ENCODE measurements at regions of chr7 and their contacts with region 1.

Region 1: GRCh38 chr7:125670926-125671572 is 741.4 kb upstream of the POT1 start:
- DNase-seq: peak in 2 of 4 donors; percentile 9 to 19
- ATAC-seq: no peak
- H3K4me3 ChIP-seq: no peak overlapping the region
- H3K27ac ChIP-seq: no peak overlapping the region
- H3K4me1 ChIP-seq: no peaks in the 10 kb centered on the region
- H3K27me3 ChIP-seq: no peaks in the 10 kb centered on the region
- CTCF ChIP-seq: peak in 1 of 2 donors; percentile 52

Region 2: DNA sequence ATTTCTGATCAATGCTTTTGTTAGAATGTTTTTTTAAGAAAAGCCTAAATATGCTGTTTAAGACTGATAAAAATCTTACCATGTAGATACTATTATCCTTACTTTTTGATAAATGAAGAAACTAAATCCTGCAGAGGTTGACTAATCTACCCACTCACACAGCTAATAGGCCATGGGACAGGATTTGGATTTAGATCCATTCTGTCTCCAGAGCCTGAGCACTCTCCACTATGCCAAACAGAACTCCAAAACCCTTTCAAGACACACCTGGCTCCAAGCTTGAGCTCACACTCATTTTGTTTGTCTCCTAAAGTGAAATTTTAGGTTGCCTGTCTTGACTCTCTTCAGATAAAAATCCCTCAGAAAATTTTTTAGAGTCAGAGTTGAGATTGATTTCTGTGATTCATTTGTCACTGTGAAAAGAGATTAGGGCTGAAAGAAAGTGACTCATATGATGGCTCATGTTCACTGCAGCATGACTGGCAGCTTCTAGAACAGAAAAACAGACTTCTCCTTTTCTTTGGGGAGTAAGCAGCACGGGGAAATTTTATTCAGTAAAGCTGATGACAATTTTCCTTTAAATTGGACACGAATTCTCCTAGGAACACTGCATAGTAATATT is 609.2 kb before region 1 on chr7:
- intact Hi-C with region 1: loop called in 1 of 2 experiments (anchors 10 kb)
- DNase-seq: no peak
- ATAC-seq: peak; percentile 50
- H3K4me3 ChIP-seq: no peak overlapping the region
- H3K27ac ChIP-seq: no peak overlapping the region
- H3K4me1 ChIP-seq: peaks cover 0 to 4% of the 10 kb centered on the region in 2 donors
- H3K27me3 ChIP-seq: no peaks in the 10 kb centered on the region
- CTCF ChIP-seq: no peak